G401 (cell line): ENCODE measurements at regions of chr14 and their contacts with region 1.

Region 1: DNA sequence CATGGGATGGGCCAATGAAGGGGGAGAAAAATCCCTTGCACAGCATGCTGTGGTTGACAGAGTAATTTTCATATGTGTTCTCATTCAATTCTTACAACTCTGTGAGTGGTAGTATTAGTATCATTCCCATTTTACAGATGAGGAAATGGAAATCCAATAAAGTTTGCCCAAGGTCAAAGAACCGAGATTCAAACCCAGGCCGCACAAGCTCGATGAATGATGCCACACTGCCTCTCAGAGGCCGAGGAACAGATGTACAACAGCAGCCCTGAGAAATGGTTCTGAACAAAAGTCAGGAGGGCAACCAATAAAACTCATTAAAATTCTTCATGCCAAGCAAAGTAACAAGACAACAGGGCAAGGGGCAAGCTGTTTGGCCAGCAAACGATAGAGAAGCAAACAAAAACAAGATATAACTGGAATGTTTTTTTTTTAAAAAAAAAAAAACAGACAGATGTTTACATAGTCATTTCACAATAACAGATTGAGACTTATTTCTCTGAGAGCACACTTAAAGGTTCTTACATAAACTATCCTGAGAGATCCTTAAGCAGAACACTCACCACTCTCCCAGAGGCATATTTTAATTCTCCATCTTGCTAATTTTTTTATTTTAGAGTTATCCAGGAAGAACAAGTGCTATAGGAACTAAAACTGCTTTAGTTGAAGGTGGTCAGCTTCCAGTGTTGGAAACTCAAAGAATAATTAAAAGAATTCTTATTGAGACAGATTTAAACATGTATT is 85.8 kb downstream of the EXOC5 start:
- DNase-seq: peak; percentile 40

Region 2: GRCh38 chr14:56514663-56515371 is 668.1 kb before region 1 on chr14:
- in situ Hi-C with region 1: loop called (anchors 25 kb)
- DNase-seq: no peak

Region 3: GRCh38 chr14:57085808-57086207 is 97.1 kb before region 1 on chr14:
- in situ Hi-C with region 1: no loop called
- DNase-seq: peak; percentile 99

Region 4: DNA sequence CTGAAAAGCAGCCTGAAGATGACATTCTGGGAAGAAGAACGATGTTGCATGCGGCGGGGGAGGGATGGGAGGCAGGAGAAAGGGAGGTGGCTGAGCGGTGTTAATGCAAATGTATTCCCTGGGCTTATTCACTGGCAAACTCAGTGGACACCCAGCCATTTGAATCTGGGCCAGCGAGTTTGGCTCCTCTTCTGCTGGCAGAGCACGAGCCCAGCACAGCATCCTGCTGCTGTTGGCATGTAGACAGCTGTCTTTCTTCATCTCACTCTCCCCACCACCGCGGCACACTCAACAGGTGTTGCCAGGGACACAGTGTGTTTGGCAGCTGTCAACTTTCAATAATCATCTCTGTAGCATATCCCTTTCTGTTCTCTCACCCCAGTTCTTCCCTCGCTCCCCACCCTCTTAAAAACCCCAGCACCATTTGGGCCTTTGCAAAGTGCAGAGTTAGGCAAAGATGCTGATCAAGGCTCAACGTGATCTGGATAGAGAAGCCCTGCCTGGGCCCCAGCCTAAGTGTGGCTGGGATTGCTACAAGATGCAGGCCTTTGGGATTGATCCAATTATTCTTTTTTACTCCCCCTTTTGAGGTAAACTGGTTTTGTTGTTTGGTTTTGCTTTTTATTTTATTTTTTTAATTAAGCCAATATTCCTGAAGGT is 46.1 kb before region 1 on chr14:
- in situ Hi-C with region 1: loop called (anchors 5 kb)
- DNase-seq: peak; percentile 94

Region 5: DNA sequence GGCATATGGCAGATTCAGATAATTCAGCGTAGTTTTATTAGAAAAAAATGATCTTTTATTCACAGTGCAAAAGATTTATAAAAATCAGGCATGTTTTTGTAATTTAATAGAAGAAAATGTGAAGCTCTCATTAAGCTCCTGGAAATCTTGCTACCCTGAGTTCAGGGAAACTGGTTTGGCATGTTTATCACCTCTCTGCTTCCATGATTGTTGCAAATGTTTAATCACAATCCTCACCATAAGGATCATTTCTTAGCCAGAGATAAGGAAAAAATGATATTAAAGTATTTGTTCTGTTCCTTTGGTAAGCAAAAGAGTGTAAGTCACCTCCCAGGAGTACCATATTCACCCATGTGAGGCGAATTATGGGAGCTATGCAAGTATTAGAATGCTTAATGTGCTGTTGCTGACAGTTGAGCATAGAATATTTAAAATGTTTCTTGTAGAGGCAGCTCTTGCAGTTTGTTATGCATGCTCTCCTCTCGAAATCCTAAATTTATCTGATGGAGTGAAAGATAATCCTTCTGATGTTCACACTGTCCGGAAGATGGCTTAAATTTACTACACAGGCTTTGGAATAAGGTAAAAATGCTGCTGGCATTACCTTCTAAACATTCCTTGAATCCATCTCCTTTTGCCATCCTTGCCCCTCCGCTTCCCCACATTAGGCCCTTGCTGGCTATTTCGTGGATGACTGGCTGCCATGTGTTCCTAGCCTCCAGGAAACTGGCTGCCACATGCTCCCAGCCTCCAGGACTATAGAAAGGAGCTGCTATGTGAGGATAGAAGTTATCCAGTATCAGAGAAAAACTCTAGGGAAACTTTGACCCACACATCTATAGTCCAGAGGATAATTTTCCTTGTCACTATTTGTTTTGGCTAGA is 426.5 kb after region 1 on chr14:
- in situ Hi-C with region 1: no loop called
- DNase-seq: peak; percentile 59